ENCODE measurements at regions of chr3 and their contacts with region 1.

Region 1: GRCh38 chr3:132543036-132543739 is 53.9 kb upstream of the ACKR4 start:
- DNase-seq: no peak
- ATAC-seq: peak; percentile 74
- H3K4me3 Mint-ChIP-seq: peak overlapping the region; percentile 13
- H3K27ac Mint-ChIP-seq: peak overlapping the region; percentile 90
- H3K4me1 Mint-ChIP-seq: peaks cover 51% of the 10 kb centered on the region
- H3K27me3 Mint-ChIP-seq: no peaks in the 10 kb centered on the region
- CTCF ChIP-seq: no peak

Region 2: DNA sequence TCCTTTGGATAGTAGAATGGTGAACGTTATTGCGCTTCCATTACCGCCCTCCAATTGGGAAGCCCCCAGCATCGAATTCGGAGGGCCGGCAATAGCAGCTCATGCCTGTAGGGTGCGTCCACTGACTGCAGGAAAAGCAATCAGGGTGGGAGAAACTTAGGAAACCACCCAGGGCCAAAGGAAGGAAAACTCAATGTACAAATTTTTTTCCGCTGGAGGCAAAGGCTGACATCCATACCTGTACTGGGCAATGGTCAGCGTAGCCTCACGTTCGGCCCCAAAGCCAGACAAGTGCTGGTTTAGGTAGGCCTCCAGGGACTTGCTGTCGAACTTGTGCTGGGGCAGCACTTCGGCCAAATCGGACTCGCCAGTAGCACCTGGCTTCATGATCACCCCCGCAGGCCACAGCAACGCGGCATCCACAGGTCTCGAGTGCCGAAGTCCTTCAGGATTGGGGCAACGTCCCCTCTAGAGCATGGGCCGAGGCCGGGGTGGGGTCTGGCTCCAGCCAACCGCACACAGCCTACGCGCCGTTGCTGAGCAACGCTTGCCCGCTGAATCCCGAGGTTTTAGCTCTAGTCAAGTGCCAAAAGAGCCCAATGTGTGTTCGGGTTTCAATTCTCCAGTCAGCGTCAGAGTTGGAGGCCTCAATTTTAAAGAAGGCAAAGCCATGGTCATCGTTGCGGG is 116.3 kb after region 1 on chr3 and contains the start of gene ACAD11:
- CTCF ChIA-PET with region 1: interaction called, 3 read pairs
- POLR2A ChIA-PET with region 1: no interaction called
- intact Hi-C with region 1: loop called (anchors 5 kb)
- DNase-seq: peak; percentile 70
- ATAC-seq: peak; percentile 59
- H3K4me3 Mint-ChIP-seq: peak within 1 kb of the TSS; percentile 92
- H3K27ac Mint-ChIP-seq: peak within 1 kb of the TSS; percentile 93
- H3K4me1 Mint-ChIP-seq: peaks cover 49% of the 10 kb centered on the region
- H3K27me3 Mint-ChIP-seq: no peaks in the 10 kb centered on the region
- CTCF ChIP-seq: peak; percentile 64
- total RNA-seq, gene ACAD11: 20.6 to 22.3 TPM